ENCODE measurements at regions of chr16 and their contacts with region 1.

Region 1: DNA sequence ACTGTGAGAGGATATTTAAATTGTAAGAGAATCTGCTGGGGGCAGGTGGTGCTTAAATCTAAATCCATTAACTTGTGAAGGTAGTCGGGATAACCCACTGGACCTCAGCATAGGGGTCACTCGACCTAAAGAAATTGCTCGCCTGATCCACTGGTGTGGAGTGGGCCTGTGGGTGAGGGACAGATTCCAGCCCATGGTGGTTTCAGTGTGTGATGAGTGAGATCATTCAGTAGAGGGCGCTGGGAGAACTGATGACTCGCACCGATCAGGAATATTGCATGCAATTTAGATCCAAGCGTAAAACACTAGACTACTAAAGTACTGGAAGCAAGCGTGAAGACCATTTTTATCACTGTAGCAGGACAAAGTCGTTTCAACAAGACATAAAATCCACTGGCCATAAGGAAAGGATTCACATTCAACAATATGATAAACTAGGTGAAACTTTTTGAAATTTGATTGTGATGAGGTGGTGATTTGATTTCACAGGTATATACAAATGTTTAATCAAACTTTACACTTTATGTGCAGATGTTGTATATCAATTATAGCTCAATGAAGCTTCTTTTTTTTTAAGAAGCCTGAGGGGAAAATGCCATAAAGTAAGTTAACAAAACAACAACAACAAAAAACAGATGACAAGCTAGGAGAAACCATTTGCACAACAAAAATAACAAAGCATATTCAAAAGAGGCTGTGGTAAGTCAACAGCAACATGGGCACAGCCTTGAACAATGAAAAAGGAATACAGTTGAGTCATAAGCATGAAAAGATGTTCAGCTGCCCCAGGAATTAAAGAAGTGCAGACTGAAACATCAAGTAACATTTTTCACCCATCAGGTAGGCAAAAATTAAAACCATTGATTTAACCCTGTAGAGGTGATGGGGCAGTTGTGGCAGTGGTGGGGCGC is 7.5 kb upstream of the TMEM170A start:
- DNase-seq: peak in 1 of 2 donors; percentile 64
- ATAC-seq: peak; percentile 76 to 96 (median 94)
- H3K4me3 ChIP-seq: no peak overlapping the region
- H3K27ac ChIP-seq: no peak overlapping the region
- H3K4me1 ChIP-seq: peaks cover 0 to 6% (median 0%) of the 10 kb centered on the region in 9 donors
- H3K27me3 ChIP-seq: no peaks in the 10 kb centered on the region
- CTCF ChIP-seq: peak; percentile 61 to 86 (median 78)

Region 2: DNA sequence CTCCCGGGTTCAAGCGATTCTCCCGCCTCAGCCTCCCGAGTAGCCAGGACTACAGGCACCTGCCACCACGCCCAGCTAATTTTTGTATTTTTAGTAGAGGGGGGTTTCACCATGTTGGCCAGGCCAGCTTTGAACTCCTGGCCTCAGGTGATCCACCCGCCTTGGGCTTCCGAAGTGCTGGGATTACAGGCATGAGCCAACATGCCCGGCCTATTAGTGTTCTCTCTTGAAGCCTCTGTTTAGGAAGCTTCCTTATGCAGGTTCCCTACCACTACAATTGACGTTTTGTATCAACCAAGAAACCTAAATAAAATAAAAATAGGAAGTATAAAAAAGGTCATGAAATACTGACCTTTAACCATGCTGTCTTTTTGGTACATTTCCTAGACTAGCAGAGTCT is 47.9 kb after region 1 on chr16:
- intact Hi-C with region 1: loop called in 5 of 10 experiments (anchors 1 to 5 kb)
- DNase-seq: no peak
- ATAC-seq: no peak
- H3K4me3 ChIP-seq: no peak overlapping the region
- H3K27ac ChIP-seq: no peak overlapping the region
- H3K4me1 ChIP-seq: peaks cover 0 to 10% (median 7%) of the 10 kb centered on the region in 9 donors
- H3K27me3 ChIP-seq: no peaks in the 10 kb centered on the region
- CTCF ChIP-seq: no peak

Region 3: DNA sequence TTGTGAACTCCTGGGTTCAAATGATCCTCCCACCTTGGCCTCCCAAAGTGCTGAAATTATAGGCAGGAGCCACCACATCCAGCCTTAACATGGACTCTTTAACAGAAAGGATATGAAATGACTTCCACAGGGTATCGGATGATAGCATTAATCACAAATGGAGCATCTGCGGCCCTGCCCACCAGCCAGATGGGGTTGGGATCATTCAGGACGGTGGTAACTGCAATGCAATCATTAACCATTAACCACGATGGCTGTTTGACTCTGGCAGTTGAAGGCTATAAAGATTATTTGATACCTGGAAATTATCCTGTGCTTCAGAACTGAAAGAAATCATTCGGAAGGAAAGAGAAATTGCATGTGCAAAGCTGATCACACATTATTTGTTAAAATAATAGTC is 69.3 kb after region 1 on chr16:
- intact Hi-C with region 1: loop called in 2 of 10 experiments (anchors 10 kb)
- DNase-seq: no peak
- ATAC-seq: no peak
- H3K4me3 ChIP-seq: no peak overlapping the region
- H3K27ac ChIP-seq: no peak overlapping the region
- H3K4me1 ChIP-seq: peaks cover 0 to 13% (median 4%) of the 10 kb centered on the region in 9 donors
- H3K27me3 ChIP-seq: no peaks in the 10 kb centered on the region
- CTCF ChIP-seq: no peak

Region 4: GRCh38 chr16:75555707-75556430 is 83.9 kb after region 1 on chr16 and contains the start of gene TMEM231:
- intact Hi-C with region 1: loop called in 4 of 10 experiments (anchors 2 to 10 kb)
- DNase-seq: peak; percentile 98
- ATAC-seq: peak; percentile 96 to 97 (median 97)
- H3K4me3 ChIP-seq: peak within 1 kb of the TSS; percentile 47 to 89 (median 72)
- H3K27ac ChIP-seq: peak within 1 kb of the TSS; percentile 57 to 90 (median 86)
- H3K4me1 ChIP-seq: peaks cover 5 to 43% (median 15%) of the 10 kb centered on the region in 9 donors
- H3K27me3 ChIP-seq: no peaks in the 10 kb centered on the region
- CTCF ChIP-seq: peak in 1 of 9 donors; percentile 15
- total RNA-seq, gene TMEM231: 3.8 to 13.4 (median 9.6) TPM

Region 5: DNA sequence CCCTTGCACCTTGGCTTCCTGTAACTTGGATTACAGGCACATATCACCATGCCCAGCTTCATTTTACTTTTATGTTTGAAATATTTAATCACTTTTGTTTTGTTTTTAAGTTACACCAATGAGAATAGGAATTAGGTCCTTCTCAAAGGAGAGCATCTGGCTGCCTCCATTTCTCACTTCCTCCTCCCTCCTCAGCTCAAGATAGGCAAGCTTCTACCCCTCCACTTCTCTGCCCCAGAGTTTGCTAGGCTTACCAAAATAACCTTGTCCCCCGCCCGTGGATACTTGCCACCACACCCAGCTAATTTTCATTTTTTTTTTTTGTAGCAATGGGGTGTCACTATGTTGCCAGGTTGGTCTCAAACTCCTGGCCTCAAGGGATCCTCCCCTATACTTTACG is 112.1 kb after region 1 on chr16:
- intact Hi-C with region 1: no loop called
- DNase-seq: no peak
- ATAC-seq: no peak
- H3K4me3 ChIP-seq: no peak overlapping the region
- H3K27ac ChIP-seq: no peak overlapping the region
- H3K4me1 ChIP-seq: peaks cover 0 to 11% (median 7%) of the 10 kb centered on the region in 9 donors
- H3K27me3 ChIP-seq: no peaks in the 10 kb centered on the region
- CTCF ChIP-seq: no peak

Region 6: GRCh38 chr16:75764154-75764768 is 292.3 kb after region 1 on chr16:
- intact Hi-C with region 1: loop called in 8 of 10 experiments (anchors 1 to 10 kb)
- DNase-seq: peak in 1 of 2 donors; percentile 54
- ATAC-seq: peak in 7 of 8 donors; percentile 64 to 97 (median 89)
- H3K4me3 ChIP-seq: no peak overlapping the region
- H3K27ac ChIP-seq: no peak overlapping the region
- H3K4me1 ChIP-seq: peaks cover 0 to 2% (median 0%) of the 10 kb centered on the region in 9 donors
- H3K27me3 ChIP-seq: no peaks in the 10 kb centered on the region
- CTCF ChIP-seq: peak; percentile 68 to 86 (median 83)

Measured in heart right ventricle (tissue), 16 donors.